Adrenal gland (tissue), 19 donors: ENCODE measurements at regions of chr13 and their contacts with region 1.

Region 1: DNA sequence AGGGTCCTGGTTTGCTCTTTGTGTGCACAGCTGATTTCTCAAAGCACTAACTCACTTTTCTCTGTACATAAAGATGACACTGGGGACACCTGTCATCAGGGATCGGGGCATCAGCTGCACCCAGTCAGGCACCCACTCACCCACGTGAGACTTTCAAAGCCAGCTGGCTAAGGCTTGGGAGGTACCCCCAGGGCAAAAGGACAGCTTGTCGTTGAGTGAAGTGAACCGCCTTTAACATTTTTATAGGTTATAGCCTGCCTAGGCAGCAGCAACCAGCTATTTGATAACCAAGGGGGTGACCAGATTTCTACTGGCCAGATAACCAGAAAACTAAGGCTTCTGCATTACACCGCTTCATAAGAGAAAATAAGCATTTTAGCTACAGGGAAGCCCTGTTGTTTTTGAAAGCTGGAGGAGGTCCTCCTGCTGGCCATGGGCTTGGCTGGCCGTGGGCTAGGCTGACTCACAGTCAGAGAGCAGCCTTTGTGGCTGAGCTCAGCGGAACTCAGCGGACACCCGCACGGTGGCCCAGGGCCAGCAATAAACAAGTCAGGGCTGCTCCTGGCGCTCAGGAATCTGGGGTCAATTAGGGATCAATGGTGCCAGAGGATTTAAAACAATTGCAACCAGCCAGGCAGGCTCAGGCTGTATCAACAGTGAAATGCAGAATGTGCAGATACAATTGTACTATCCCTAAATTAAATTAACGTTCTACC is 57.1 kb downstream of the ALOX5AP start:
- DNase-seq: peak; percentile 84 to 96 (median 92)
- H3K4me3 ChIP-seq: no peak overlapping the region
- H3K27ac ChIP-seq: peak overlapping the region in 3 of 5 donors; percentile 39 to 69 (median 40)
- H3K4me1 ChIP-seq: peaks cover 11 to 31% of the 10 kb centered on the region in 2 donors
- H3K27me3 ChIP-seq: no peaks in the 10 kb centered on the region
- CTCF ChIP-seq: peak in 5 of 6 experiments; percentile 41 to 58 (median 46)
- POLR2A ChIP-seq: no peak

Region 2: GRCh38 chr13:30477346-30478195 is 314.9 kb before region 1 on chr13:
- intact Hi-C with region 1: loop called in 1 of 2 experiments (anchors 10 kb)
- DNase-seq: no peak
- H3K4me3 ChIP-seq: no peak overlapping the region
- H3K27ac ChIP-seq: no peak overlapping the region
- H3K4me1 ChIP-seq: no peaks in the 10 kb centered on the region
- H3K27me3 ChIP-seq: no peaks in the 10 kb centered on the region
- CTCF ChIP-seq: no peak
- POLR2A ChIP-seq: no peak